CD4-positive, alpha-beta T cell (primary cell): ENCODE measurements at regions of chr10 and their contacts with region 1.

Region 1: DNA sequence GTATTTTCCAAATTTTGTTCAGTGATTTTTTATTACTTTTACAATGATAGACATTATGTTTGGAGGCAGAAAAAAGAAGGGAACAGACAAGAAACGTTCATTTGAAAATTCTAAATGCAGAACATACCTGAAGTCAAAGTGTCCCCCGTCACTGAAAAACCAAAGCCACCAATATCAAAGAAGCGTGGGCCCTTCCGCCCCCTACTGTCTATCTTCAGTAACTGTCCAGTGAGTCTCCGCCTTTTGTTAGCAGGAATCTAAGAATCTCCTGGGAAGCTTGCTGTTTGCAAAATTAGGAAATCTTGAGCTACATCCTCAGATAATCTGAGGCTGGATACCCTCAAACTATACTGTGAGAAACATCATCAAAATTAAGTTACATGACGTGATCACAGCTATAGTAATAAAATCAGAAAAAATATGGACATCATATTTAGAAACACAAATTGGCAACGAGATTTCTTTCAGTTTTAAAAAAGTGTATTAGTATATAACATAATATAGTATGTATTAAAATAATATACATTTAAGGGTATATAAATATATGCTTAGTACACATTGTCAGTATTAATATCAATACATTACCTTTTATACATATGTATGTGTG is 169.3 kb upstream of the AKR1E2 start:
- DNase-seq: peak; percentile 9 to 76 (median 36)
- ATAC-seq: no peak
- H3K4me3 ChIP-seq: no peak overlapping the region
- H3K4me3 Mint-ChIP-seq: no peak overlapping the region
- H3K27ac ChIP-seq: no peak overlapping the region
- H3K27ac Mint-ChIP-seq: no peak overlapping the region
- H3K4me1 ChIP-seq: peaks cover 5% of the 10 kb centered on the region
- H3K4me1 Mint-ChIP-seq: peaks cover 4% of the 10 kb centered on the region
- H3K27me3 ChIP-seq: no peaks in the 10 kb centered on the region
- H3K27me3 Mint-ChIP-seq: peaks cover 1% of the 10 kb centered on the region
- CTCF ChIP-seq: peak; percentile 96

Region 2: DNA sequence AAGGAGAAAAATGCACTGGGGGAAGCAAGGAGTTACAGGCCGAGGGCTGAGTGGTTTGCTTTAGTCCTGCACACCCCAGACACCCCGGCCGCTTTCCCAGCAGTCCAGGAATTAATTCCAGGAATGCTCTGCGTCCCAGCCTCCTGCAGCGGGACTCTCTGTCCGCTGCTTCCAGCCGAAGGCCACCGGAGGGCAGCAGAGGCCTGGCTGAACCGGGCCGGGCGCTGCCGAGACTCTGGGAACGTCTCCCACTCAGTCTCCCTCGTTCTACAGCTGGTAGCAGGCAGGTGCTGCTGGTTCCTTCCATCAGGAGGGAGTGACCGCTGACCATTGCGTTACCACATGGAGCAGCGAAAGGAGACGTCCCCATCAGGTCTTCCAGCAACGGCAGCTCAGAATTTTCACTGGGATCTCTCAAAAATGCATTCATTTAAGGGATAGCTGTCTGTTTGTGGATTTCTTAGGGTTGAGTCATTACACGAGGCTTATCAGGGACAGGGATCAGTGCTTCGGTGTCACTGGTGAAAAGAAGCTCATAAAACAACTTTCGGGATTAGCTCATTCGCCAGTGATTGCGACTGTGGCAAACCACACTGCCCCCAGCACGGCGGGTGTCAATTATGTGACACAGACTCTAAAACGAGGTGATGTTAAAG is 1459.2 kb before region 1 on chr10:
- CTCF ChIA-PET with region 1: interaction called, 5 read pairs
- POLR2A ChIA-PET with region 1: no interaction called
- intact Hi-C with region 1: loop called (anchors 2 kb)
- DNase-seq: peak; percentile 33 to 77 (median 45)
- ATAC-seq: peak; percentile 81
- H3K4me3 ChIP-seq: peak overlapping the region; percentile 37
- H3K4me3 Mint-ChIP-seq: peak overlapping the region; percentile 84
- H3K27ac ChIP-seq: no peak overlapping the region
- H3K27ac Mint-ChIP-seq: no peak overlapping the region
- H3K4me1 ChIP-seq: peaks cover 24% of the 10 kb centered on the region
- H3K4me1 Mint-ChIP-seq: peaks cover 9% of the 10 kb centered on the region
- H3K27me3 ChIP-seq: peaks cover 3 to 15% of the 10 kb centered on the region in 2 experiments
- H3K27me3 Mint-ChIP-seq: peaks cover 33% of the 10 kb centered on the region
- CTCF ChIP-seq: peak; percentile 72

Region 3: DNA sequence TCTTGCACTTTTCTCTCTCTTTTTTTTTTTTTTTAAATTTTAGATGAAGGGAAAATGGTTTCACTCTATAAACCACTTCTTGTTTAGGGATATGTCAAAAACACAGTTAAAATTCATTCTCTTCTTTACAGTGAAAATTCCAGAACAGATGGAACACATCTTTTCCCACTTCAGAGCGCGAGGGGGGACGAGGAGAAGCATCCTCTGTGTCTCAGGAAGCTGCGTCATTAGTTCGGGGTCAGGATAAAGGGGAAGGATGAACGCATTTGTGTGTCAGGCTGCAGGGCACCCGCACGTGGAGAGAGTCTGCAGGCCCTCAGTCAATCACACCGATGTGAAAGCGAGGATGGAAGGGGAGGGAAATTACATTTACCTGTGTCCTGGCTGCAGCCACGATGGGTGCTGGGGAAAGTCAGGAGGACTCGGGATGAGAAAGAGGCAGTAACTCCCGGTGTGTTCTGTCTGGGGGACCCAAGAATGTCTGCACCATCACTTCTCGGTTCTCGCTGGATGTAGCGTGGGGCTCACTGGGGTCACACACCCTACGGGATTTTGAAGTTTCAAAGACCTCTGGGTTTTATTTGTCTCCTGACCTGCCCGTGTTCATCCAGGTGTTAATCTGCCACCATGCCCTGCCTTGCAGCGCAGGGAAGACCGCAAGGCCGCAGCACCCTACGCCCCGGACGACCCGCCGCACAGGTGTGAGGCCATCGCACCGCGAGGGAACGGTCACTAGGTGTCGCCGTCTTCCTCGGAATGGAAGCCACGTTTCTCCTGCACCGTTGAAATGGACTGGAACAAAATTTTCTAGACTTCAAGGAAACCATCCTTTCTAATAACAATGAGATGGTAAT is 1417.4 kb before region 1 on chr10:
- CTCF ChIA-PET with region 1: interaction called, 3 read pairs
- POLR2A ChIA-PET with region 1: no interaction called
- intact Hi-C with region 1: loop called (anchors 1 kb)
- DNase-seq: peak; percentile 47 to 83 (median 70)
- ATAC-seq: peak; percentile 81
- H3K4me3 ChIP-seq: no peak overlapping the region
- H3K4me3 Mint-ChIP-seq: no peak overlapping the region
- H3K27ac ChIP-seq: no peak overlapping the region
- H3K27ac Mint-ChIP-seq: no peak overlapping the region
- H3K4me1 ChIP-seq: peaks cover 4% of the 10 kb centered on the region
- H3K4me1 Mint-ChIP-seq: peaks cover 5% of the 10 kb centered on the region
- H3K27me3 ChIP-seq: peaks cover 0 to 8% of the 10 kb centered on the region in 2 experiments
- H3K27me3 Mint-ChIP-seq: peaks cover 21% of the 10 kb centered on the region
- CTCF ChIP-seq: peak; percentile 94

Region 4: GRCh38 chr10:3735175-3735574 is 921.5 kb before region 1 on chr10:
- CTCF ChIA-PET with region 1: no interaction called
- POLR2A ChIA-PET with region 1: no interaction called
- intact Hi-C with region 1: loop called in 1 of 2 experiments (anchors 10 kb)
- DNase-seq: peak in 3 of 14 experiments; percentile 16 to 39 (median 17)
- ATAC-seq: no peak
- H3K4me3 ChIP-seq: no peak overlapping the region
- H3K4me3 Mint-ChIP-seq: no peak overlapping the region
- H3K27ac ChIP-seq: no peak overlapping the region
- H3K27ac Mint-ChIP-seq: no peak overlapping the region
- H3K4me1 ChIP-seq: no peaks in the 10 kb centered on the region
- H3K4me1 Mint-ChIP-seq: peaks cover 4% of the 10 kb centered on the region
- H3K27me3 ChIP-seq: no peaks in the 10 kb centered on the region
- H3K27me3 Mint-ChIP-seq: no peaks in the 10 kb centered on the region
- CTCF ChIP-seq: no peak

Region 5: DNA sequence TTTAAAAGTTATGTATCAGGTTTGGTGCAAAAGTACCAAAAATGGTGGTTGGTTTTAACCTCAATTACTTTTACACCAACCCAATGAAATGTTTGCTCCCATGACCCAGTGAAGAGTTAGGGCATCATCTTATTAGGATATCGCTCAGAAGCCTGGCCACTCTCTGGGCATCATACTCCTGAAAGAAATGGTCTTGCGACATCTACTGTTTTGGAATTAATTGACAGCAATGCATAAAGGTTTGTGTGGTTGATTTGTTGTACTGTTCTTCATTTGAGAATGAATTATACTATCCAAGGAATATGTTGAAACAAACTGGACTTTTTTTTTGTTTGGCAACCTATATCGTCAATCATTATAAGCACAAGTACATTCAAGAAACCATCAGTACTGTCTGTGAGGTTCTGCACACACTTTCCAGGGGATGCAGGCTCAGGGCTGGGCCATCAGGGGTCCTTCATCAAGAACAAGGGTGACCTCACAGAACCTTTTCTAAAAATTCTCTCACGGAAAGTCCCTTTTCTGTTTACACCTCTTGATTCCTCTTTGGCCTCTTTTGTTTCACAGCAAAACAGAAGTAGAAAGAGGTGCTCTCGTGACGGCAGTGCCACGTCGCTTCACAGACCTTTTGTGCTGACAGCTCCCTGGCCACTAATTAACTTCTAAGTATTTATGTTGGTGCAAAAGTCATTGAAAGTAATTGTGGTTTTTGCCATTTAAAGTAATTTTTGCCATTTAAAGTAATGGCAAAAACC is 754.4 kb before region 1 on chr10:
- CTCF ChIA-PET with region 1: no interaction called
- POLR2A ChIA-PET with region 1: no interaction called
- intact Hi-C with region 1: loop called in 1 of 2 experiments (anchors 10 kb)
- DNase-seq: peak in 10 of 14 experiments; percentile 7 to 85 (median 24)
- ATAC-seq: peak; percentile 85
- H3K4me3 ChIP-seq: no peak overlapping the region
- H3K4me3 Mint-ChIP-seq: no peak overlapping the region
- H3K27ac ChIP-seq: no peak overlapping the region
- H3K27ac Mint-ChIP-seq: peak overlapping the region; percentile 4
- H3K4me1 ChIP-seq: peaks cover 17% of the 10 kb centered on the region
- H3K4me1 Mint-ChIP-seq: peaks cover 20% of the 10 kb centered on the region
- H3K27me3 ChIP-seq: no peaks in the 10 kb centered on the region
- H3K27me3 Mint-ChIP-seq: no peaks in the 10 kb centered on the region
- CTCF ChIP-seq: no peak

Region 6: GRCh38 chr10:4632757-4633156 is 23.9 kb before region 1 on chr10:
- CTCF ChIA-PET with region 1: no interaction called
- POLR2A ChIA-PET with region 1: no interaction called
- intact Hi-C with region 1: no loop called
- DNase-seq: no peak
- ATAC-seq: no peak
- H3K4me3 ChIP-seq: no peak overlapping the region
- H3K4me3 Mint-ChIP-seq: no peak overlapping the region
- H3K27ac ChIP-seq: no peak overlapping the region
- H3K27ac Mint-ChIP-seq: no peak overlapping the region
- H3K4me1 ChIP-seq: no peaks in the 10 kb centered on the region
- H3K4me1 Mint-ChIP-seq: no peaks in the 10 kb centered on the region
- H3K27me3 ChIP-seq: no peaks in the 10 kb centered on the region
- H3K27me3 Mint-ChIP-seq: no peaks in the 10 kb centered on the region
- CTCF ChIP-seq: no peak